Transverse colon (tissue), 4 donors: ENCODE measurements at regions of chr4 and their contacts with region 1.

Region 1: DNA sequence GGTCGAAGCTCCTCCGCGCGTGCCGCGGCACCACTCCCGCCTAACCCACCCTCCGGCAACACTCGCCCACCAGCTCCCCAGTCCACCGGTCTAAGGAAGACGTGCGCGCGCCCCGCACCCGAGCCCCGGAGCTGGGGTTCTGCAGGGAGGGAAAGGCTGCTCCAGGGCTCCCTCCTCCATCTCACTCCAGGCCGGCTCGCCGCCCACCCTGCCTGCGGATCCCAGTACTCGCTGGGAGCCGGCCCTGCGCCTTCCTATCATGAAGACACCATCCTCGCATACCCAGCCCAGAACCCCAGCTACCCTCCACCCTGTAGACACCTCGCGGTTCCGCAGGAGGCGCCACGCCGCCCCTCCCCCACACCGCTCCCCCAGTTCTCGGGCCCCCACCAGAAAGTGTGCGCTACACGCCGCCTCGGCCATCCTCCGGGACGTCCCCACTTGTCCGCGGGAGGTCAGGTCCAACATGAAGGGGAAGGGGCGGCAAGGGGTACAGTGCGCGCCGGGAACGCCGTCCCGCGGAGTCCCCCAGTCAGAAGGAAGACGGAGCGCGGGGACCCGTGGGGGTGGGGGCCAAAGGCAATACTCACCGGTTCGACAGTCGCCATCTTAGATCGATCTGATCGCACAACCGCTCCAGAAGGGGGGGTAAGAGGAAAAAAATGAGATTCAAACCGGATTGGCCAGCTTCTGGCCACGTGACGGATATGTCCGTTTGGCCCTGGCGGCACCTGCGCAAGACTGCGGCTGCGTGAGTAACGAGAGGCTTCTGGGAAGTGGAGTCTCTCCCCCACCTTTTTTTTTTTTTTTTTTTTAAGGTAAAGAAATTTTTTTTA is at the start of gene EIF4E:
- DNase-seq: peak; percentile 98
- H3K4me3 ChIP-seq: peak within 1 kb of the TSS; percentile 69 to 91 (median 86)
- H3K27ac ChIP-seq: peak within 1 kb of the TSS; percentile 93 to 98 (median 96)
- H3K4me1 ChIP-seq: peaks cover 13 to 41% (median 23%) of the 10 kb centered on the region in 4 donors
- H3K27me3 ChIP-seq: no peaks in the 10 kb centered on the region
- CTCF ChIP-seq: peak in 4 of 5 experiments; percentile 5 to 23 (median 14)
- EP300 ChIP-seq: no peak
- POLR2A ChIP-seq: no peak
- total RNA-seq, gene EIF4E: 20.9 to 103 (median 48.4) TPM

Region 2: GRCh38 chr4:98467627-98468072 is 461.1 kb before region 1 on chr4:
- in situ Hi-C with region 1: loop called in 1 of 4 experiments (anchors 25 kb)
- intact Hi-C with region 1: no loop called
- DNase-seq: peak; percentile 81
- H3K4me3 ChIP-seq: peak overlapping the region in 3 of 4 donors; percentile 5 to 43 (median 28)
- H3K27ac ChIP-seq: no peak overlapping the region
- H3K4me1 ChIP-seq: peaks cover 0 to 10% (median 4%) of the 10 kb centered on the region in 4 donors
- H3K27me3 ChIP-seq: no peaks in the 10 kb centered on the region
- CTCF ChIP-seq: peak; percentile 69 to 81 (median 75)
- EP300 ChIP-seq: no peak
- POLR2A ChIP-seq: no peak

Region 3: GRCh38 chr4:98976694-98977310 is 48.1 kb after region 1 on chr4:
- in situ Hi-C with region 1: no loop called
- intact Hi-C with region 1: no loop called
- DNase-seq: no peak
- H3K4me3 ChIP-seq: no peak overlapping the region
- H3K27ac ChIP-seq: no peak overlapping the region
- H3K4me1 ChIP-seq: no peaks in the 10 kb centered on the region
- H3K27me3 ChIP-seq: no peaks in the 10 kb centered on the region
- CTCF ChIP-seq: no peak
- EP300 ChIP-seq: no peak
- POLR2A ChIP-seq: no peak

Region 4: DNA sequence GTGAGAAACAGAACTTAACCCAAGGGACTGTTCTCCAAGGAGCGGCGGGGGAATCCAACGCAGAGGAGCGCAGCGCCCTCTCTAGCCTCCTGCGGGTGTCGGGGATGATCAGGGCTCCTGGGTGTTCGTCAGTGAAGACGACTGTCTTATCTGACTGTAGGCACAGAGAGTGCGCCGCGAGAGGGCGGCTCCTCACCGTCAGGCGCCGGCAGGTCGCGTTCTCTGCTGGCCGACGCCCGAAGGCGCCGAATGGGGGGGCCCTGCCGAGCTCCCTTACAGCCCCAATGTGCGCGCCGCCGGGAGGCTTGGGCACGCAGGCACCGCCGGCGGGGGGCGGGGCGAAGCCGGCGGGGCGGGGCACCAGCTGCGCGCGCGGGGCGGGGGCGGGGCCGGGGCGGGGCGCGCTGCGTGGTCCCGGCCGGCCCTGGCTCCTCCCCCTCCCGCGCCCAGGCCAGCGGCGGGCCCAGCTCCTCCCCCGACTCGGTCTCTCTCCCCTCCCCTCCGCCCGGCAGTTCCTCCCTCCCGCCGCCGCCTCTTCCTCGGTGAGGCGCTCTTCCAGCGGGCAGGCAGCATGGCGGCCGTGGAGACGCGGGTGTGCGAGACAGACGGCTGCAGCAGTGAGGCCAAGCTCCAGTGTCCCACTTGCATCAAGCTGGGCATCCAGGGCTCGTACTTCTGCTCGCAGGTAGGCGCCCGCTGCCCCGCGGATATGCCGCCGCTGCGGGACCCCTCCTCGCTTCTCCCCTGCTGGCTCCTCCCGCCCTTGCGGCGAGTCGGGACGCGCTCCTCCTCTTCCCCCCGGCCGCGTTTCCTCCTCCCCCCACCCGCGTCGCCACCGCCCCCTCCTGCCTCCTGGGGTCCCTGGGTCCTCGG is 66.7 kb after region 1 on chr4 and contains the start of gene METAP1:
- in situ Hi-C with region 1: loop called in 1 of 4 experiments (anchors 10 kb)
- intact Hi-C with region 1: no loop called
- DNase-seq: peak; percentile 97
- H3K4me3 ChIP-seq: peak within 1 kb of the TSS; percentile 86 to 99 (median 93)
- H3K27ac ChIP-seq: peak within 1 kb of the TSS; percentile 90 to 95 (median 93)
- H3K4me1 ChIP-seq: peaks cover 6 to 30% (median 19%) of the 10 kb centered on the region in 4 donors
- H3K27me3 ChIP-seq: no peaks in the 10 kb centered on the region
- CTCF ChIP-seq: peak; percentile 34 to 65 (median 54)
- EP300 ChIP-seq: no peak
- POLR2A ChIP-seq: peak; percentile 80
- total RNA-seq, gene METAP1: 34.8 to 66.1 (median 55.9) TPM

Region 5: DNA sequence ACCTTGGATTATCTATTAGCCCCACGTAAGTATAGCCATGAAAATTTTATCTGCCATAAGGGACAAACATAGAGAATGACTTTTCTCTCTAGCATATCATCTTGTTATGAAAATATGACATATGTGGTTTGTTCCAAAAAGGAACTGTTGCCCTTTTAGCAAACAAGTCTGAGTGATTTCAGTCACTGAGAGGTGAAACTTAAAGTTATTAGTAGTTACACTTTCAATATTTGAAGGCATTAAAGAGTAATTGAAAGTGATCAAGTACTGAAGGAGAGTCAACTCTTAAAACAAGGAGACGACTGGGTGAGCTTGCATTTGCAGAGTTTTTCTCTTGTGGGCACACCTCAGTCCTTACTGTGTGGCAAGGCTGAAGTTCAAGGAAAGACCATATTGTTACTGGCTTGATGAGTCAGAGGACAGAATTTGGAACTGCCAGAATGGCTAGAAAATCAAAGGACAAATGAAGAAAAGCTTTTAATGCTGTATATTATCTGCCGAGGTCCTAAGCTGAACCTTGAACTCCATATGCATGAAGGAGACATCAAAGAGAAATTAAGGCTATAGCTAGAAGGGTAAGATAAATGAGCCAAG is 1794.2 kb after region 1 on chr4:
- in situ Hi-C with region 1: no loop called
- intact Hi-C with region 1: loop called (anchors 10 kb)
- DNase-seq: no peak
- H3K4me3 ChIP-seq: no peak overlapping the region
- H3K27ac ChIP-seq: no peak overlapping the region
- H3K4me1 ChIP-seq: no peaks in the 10 kb centered on the region
- H3K27me3 ChIP-seq: no peaks in the 10 kb centered on the region
- CTCF ChIP-seq: no peak
- EP300 ChIP-seq: no peak
- POLR2A ChIP-seq: no peak